ENCODE measurements at regions of chr5 and their contacts with region 1.

Region 1: GRCh38 chr5:188488-189481 is 2.5 kb upstream of the LRRC14B start:
- DNase-seq: peak; percentile 93
- H3K4me3 Mint-ChIP-seq: no peak overlapping the region
- H3K27ac Mint-ChIP-seq: peak overlapping the region; percentile 19
- H3K4me1 Mint-ChIP-seq: peaks cover 6% of the 10 kb centered on the region
- H3K27me3 Mint-ChIP-seq: peaks cover 3% of the 10 kb centered on the region

Region 2: GRCh38 chr5:30131-30530 is 158.7 kb before region 1 on chr5:
- CTCF ChIA-PET with region 1: no interaction called
- POLR2A ChIA-PET with region 1: no interaction called
- intact Hi-C with region 1: no loop called
- DNase-seq: no peak
- H3K4me3 Mint-ChIP-seq: no peak overlapping the region
- H3K27ac Mint-ChIP-seq: no peak overlapping the region
- H3K4me1 Mint-ChIP-seq: peaks cover 3% of the 10 kb centered on the region
- H3K27me3 Mint-ChIP-seq: peaks cover 31% of the 10 kb centered on the region

Region 3: DNA sequence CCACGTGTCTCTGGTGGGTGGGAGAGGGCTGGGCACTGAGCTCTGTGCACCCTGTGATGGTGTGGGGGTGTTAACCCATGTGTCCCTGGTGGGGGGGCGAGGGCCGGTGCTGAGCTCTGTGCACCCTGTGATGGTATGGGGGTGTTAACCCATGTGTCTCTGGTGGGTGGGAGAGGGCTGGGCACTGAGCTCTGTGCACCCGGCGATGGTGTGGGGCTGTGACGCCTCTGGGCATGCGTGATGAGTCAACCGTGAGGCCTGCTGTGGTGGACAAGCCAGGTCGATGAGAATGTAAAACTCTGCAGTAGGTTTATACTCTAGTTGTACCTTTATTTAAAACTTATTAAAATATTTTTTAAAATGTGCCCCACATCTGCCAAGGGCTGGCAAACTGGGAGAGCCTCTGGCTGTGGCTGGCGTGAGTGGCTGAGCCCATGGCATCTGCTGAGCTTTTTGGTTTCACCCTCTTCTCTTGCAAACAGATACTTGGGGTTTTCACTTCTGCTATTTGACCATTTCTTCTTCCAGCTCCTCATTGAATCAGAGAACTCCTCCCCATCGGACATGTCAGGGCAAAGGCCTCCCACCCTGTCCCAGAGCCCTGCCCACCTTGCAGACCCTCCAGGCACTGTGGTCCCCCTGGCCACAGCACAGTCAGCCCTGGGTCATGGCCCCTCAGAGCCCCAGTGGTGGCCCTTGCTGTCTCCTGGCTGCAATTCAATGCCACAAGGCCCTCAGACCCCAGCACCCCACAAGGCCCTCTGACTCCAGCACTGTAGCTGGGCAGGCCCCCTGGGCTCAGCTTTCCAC is 235.7 kb after region 1 on chr5:
- CTCF ChIA-PET with region 1: interaction called, 7 read pairs
- POLR2A ChIA-PET with region 1: no interaction called
- intact Hi-C with region 1: loop called (anchors 5 kb)
- DNase-seq: no peak
- H3K4me3 Mint-ChIP-seq: no peak overlapping the region
- H3K27ac Mint-ChIP-seq: no peak overlapping the region
- H3K4me1 Mint-ChIP-seq: no peaks in the 10 kb centered on the region
- H3K27me3 Mint-ChIP-seq: peaks cover 10% of the 10 kb centered on the region